Dorsolateral prefrontal cortex (tissue), 120 donors: ENCODE measurements at regions of chr9 and their contacts with region 1.

Region 1: DNA sequence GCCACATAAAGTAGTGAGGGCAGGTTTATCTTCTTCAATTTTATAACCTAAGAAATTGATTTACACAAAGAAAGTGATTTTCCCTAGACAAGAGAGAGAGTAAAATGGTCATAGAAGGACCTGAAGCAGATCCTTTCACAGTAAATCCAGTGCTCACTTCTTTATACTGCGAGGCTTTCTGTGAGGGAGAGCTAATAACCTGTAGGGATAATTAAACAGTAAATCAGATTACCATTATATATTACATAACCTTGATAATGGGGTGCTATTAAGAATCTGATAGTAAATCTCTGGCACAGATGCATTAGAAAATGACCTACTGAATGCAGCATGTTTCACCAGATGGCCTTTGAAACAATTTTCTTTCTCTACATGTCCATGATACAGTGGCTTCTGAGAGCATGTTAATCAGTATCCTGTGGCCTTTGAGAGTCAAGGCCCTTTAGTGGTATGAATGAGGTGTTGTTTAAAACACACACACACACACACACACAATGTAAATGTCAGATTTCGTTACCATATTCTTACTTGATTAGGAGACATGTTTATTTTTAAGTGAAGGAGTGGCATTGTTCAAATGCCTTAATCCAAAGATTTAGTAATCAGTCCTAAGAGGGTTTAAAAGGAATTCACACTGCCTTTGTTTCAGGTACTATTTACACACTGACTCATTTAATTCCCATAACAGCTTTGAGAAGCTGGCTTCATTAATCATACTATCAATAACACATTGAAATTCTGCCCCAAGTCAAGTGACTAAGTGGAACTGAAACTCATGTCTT is 124.7 kb downstream of the ALDH1A1 start:
- DNase-seq: no peak
- H3K4me3 ChIP-seq: no peak overlapping the region
- H3K27ac ChIP-seq: no peak overlapping the region
- H3K27me3 ChIP-seq: no peaks in the 10 kb centered on the region
- CTCF ChIP-seq: no peak

Region 2: GRCh38 chr9:72038890-72039410 is 789.2 kb before region 1 on chr9:
- intact Hi-C with region 1: loop called in 1 of 2 experiments (anchors 5 kb)
- DNase-seq: peak; percentile 57 to 88 (median 80)
- H3K4me3 ChIP-seq: peak overlapping the region in 1 of 59 donors; percentile 11
- H3K27ac ChIP-seq: peak overlapping the region in 7 of 59 donors; percentile 8 to 71 (median 46)
- H3K27me3 ChIP-seq: no peaks in the 10 kb centered on the region
- CTCF ChIP-seq: peak; percentile 94 to 99 (median 98)

Region 3: DNA sequence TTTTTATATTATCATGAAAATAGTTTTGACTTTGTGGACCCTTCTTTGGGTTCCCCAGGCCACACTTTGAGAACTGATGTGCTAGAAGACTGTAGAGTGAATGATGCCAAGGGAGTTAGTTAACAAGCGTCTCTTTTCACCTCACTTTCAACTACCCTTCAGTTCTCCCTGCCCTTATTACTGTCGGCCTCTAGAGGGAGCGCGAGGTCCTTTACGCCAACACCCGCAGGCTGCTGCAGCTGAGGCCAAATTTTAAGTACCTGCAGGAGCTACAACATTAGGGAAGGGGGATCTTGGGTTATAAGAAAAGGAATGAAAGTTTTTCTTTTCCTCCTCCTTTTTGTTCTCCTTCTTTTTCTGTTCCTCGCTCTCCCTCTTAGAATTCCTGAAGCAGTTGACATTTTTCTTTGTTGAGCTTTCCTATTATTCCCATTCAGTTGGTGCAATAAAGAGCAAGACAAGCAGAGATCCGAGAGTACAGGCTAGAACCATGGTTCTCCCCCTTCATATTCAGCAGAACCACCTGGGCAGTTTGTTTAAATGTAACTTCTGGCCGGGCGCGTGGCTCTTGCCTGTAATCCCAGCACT is 547.1 kb before region 1 on chr9:
- intact Hi-C with region 1: loop called in 1 of 2 experiments (anchors 5 kb)
- DNase-seq: peak; percentile 49 to 81 (median 67)
- H3K4me3 ChIP-seq: no peak overlapping the region
- H3K27ac ChIP-seq: no peak overlapping the region
- H3K27me3 ChIP-seq: no peaks in the 10 kb centered on the region
- CTCF ChIP-seq: peak; percentile 56 to 97 (median 89)

Region 4: DNA sequence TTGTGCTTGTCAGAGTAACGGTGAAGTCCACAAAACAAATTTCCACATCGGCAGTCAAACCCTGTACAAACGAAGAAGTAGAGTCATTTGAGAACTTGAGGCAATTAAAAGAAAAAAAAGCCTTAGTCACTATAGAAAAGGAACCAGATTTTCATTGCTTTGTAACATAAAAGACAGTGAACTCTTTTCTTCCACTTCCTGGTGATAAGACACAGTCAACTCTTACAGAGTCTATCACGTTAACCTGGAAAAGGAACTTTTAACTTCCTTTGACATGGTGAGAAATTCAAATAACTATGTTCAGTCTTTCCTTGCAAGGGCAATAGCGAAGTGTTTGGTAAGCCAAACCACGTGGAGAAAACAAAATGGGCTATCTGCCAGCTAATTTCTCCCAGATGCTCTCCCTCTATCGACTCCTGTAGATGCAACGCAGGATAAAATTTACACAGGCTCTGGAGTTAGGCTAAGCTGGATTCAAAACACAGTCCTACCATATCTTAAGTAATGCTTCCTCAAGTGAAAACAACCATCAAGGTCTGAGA is 472.0 kb before region 1 on chr9:
- intact Hi-C with region 1: loop called in 1 of 2 experiments (anchors 10 kb)
- DNase-seq: peak in 1 of 10 donors; percentile 30
- H3K4me3 ChIP-seq: peak overlapping the region in 9 of 59 donors; percentile 2 to 90 (median 8)
- H3K27ac ChIP-seq: peak overlapping the region in 39 of 59 donors; percentile 6 to 100 (median 41)
- H3K27me3 ChIP-seq: no peaks in the 10 kb centered on the region
- CTCF ChIP-seq: peak in 1 of 56 donors; percentile 18

Region 5: DNA sequence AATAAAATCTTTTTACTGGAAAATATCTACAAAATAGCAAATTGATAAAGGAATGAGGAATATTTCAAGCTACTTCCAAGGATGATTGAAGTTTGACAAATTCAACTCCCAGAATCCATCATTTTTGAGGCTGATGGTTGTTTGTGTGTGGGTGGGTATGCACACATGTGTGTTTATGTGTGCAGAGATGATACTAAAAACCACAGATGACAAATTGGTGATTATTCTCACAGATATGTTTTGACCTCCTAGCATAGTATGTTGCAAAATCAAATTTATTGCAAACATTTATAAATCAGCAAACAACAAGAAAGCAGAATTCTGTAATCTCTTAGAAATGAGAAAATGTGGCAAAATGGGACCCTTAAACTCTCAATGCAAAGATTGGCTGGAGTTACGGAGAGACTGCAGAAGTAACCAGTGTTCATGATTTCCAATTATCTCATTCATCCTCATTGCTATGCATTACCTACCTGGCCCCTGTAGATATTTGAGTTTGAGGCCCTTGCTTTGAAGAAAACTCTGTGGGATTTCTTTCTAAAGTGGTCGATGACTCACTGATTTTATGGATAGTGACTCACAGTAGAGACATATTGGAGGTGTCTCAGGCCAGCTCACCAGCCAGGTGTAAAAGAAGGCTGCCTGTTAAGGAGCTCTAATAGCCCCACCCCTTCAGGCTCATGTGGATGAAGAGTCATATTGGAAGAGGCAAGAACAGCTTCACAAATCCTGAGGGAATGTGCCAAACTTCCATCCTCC is 351.3 kb before region 1 on chr9:
- intact Hi-C with region 1: no loop called
- DNase-seq: no peak
- H3K4me3 ChIP-seq: no peak overlapping the region
- H3K27ac ChIP-seq: no peak overlapping the region
- H3K27me3 ChIP-seq: no peaks in the 10 kb centered on the region
- CTCF ChIP-seq: no peak